ENCODE measurements at regions of chr1 and their contacts with region 1.

Region 1: DNA sequence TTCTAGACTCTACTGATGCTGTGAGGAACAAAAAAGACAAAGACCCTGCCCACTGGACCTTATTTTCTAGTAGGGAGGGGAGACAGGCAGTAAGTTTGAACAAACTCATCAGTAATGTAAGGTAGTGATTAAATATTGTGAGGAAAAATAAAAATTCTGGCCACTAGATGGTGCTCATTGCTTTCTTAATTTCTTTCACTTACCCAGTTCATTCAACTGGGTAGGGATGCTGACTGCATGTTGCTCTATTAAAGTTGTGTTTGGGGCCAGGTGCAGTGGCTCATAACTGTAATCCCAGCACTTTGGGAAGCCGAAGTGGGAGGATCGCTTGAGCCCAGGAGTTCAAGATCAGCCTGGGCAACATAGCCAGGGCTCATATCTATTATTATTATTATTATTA is 6.3 kb upstream of the KYAT3 start:
- DNase-seq: no peak

Region 2: DNA sequence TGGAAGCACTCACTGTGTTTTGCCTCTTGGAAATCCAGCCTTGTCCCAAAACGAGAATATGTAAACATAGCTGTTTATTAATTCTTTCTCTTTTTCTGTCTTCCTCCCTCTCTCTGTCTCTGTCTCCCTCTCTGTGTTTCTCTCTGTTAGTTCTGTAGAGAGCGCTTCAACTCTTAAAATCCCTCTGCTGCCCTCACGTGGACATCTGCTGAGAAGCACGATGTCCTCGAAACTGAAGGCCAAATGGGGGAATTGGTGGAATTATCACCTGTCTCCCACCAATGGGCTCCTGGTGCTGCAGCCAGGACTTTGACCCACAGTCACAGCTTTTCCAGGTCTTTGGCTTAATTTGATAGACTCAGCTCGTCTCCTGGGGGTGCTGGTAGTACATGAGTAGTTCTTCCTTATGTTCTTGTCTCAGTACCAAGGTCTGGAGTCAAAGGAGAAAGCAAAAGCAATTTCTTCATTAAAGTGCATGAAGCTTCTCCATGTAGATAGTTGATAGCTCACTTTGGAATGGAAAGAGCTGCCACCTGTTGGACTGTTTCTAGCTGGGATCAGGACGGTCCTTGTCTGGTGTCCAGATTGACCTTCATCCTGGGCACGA is 359.7 kb after region 1 on chr1:
- intact Hi-C with region 1: loop called in 1 of 2 experiments (anchors 5 kb)
- DNase-seq: peak; percentile 91

Region 3: DNA sequence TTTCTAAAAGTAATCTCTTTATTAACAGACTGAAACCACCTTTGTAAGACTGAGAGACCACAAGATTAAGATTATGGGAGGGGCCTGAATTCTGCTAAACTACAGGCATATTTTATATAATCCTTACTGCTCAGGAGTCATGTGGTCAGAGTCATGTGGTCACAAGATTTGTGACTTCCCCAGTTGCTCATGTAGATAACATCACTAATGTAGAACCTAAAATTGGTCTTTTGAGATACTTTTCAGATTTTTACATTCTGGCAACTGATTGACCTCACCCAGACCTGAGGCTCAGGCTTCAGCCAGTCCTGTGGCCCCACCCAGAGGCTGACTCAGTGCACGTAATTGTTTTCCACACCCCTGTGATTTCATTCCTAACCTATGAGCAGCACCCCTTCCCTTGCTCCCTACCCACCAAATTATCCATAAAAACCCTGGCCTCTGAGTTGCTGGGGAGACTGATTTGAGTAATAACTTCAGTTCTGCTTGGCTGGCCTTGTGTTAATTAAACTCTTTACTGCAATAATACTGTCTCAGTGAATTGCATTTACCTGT is 954.4 kb after region 1 on chr1:
- intact Hi-C with region 1: no loop called
- DNase-seq: no peak